ENCODE measurements at regions of chr1 and their contacts with region 1.

Region 1: GRCh38 chr1:39098546-39099250 is 72.5 kb downstream of the NDUFS5 start:
- H3K4me3 ChIP-seq: no peak overlapping the region
- H3K27ac ChIP-seq: no peak overlapping the region
- H3K4me1 ChIP-seq: peaks cover 10% of the 10 kb centered on the region
- CTCF ChIP-seq: peak; percentile 66; the same call in 1 of the 2 replicates

Region 2: DNA sequence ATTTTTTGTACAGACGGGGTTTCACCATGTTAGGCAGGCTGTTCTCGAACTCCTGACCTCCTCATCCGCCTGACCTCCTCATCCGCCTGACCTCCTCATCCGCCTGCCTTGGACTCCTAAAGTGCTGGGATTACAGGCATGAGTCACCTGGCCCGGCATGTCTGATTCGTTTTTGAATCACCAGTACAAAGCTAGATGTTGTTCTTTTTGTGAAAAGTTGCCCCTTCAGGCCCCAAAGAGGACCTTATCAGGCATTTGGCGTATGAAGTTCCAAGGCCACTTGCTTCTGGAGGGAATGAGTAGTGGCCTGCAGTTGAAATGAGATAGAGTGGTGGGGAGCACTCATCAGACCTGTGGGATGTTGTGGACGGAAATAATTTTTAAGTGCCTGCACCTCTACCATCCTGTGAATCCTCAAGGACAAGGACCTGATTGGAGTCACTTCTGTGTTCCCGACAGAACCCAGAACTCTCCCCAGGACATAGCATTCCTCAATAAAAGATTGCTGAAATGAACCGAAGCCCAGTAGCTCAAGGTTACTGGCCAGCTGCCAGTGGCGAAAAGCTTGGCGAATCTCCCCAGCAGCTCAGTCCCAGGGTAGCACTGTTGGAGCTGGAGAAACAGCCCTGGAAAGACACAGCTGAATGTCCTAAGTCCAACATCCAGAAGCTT is 22.4 kb before region 1 on chr1:
- CTCF ChIA-PET with region 1: no interaction called
- POLR2A ChIA-PET with region 1: no interaction called
- H3K4me3 ChIP-seq: no peak overlapping the region
- H3K27ac ChIP-seq: no peak overlapping the region
- H3K4me1 ChIP-seq: no peaks in the 10 kb centered on the region
- CTCF ChIP-seq: no peak

Region 3: DNA sequence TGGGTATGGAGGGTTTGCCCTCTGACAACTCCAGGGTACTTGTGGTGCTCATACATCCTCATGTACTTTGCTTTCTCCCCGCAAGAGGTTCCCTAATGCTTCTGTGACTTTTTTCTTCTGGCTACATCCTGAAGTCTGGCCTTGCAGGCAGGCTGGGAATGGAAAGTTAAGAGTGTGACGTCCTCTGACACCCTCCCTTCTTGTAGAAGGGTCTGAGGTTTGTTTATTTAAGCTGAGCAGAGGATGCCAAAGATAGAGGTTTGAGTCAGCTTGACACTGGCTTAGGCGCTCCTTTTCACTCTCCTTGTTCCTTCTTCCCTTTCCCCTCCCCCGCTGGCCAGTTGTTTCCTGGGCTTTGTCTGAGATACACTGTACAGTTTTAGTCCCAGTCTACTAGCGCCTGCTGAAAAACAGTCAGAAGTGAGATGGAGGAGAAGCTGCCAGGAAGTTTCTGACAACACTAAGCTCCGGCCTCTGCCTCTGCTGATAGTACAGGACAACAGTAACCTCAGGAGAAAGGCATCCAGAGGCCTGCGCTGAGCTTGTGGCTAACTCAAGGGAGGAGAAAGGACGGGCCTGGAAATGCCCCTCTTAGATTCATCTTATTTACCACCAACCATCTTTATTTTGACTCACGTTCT is 105.9 kb after region 1 on chr1 and contains the start of gene MACF1:
- CTCF ChIA-PET with region 1: interaction called, 14 read pairs
- POLR2A ChIA-PET with region 1: interaction called, 3 read pairs
- H3K4me3 ChIP-seq: peak within 1 kb of the TSS; percentile 29
- H3K27ac ChIP-seq: peak within 1 kb of the TSS; percentile 63
- H3K4me1 ChIP-seq: peaks cover 11% of the 10 kb centered on the region
- CTCF ChIP-seq: peak; percentile 20; the same call in 1 of the 2 replicates

Region 4: DNA sequence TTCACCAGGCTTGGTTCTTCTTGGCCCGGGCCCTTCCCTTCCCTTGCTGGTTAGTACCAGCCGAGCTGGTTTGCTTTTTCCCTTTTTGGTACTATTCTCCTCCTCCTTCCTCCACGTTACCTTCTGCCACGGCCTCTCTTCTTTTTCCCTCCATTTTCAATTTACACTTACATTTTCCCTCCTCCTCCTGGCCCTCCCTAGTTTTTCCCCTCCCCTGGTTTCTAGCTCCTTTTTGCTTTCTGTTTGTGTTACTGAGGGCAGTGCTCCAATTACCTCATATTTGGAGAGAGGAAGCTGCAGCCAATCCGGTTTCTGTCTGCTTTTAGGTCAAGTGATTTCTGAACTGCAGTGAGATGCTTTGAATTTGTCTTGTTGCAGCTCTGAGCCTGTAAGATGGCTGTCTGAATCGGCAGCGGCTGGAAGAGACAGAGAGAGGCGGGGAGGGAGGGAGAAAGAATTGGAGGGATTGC is 169.4 kb after region 1 on chr1:
- CTCF ChIA-PET with region 1: interaction called, 31 read pairs
- POLR2A ChIA-PET with region 1: interaction called, 6 read pairs
- H3K4me3 ChIP-seq: peak overlapping the region; percentile 41
- H3K27ac ChIP-seq: peak overlapping the region; percentile 52
- H3K4me1 ChIP-seq: peaks cover 16% of the 10 kb centered on the region
- CTCF ChIP-seq: no peak

Region 5: GRCh38 chr1:39378377-39378776 is 279.7 kb after region 1 on chr1:
- CTCF ChIA-PET with region 1: interaction called, 12 read pairs
- POLR2A ChIA-PET with region 1: no interaction called
- H3K4me3 ChIP-seq: no peak overlapping the region
- H3K27ac ChIP-seq: no peak overlapping the region
- H3K4me1 ChIP-seq: no peaks in the 10 kb centered on the region
- CTCF ChIP-seq: peak; percentile 37; the same call in 1 of the 2 replicates

Region 6: GRCh38 chr1:39408641-39409054 is 309.9 kb after region 1 on chr1:
- CTCF ChIA-PET with region 1: interaction called, 10 read pairs
- POLR2A ChIA-PET with region 1: no interaction called
- H3K4me3 ChIP-seq: peak overlapping the region; percentile 83
- H3K27ac ChIP-seq: peak overlapping the region; percentile 75
- H3K4me1 ChIP-seq: peaks cover 9% of the 10 kb centered on the region
- CTCF ChIP-seq: no peak